Activated naive CD8-positive, alpha-beta T cell treated with anti-CD3 and anti-CD28 coated beads, Interleukin-2, amount 10 ng/mL, durations not matched to agents 7 days and 5 days (primary cell): ENCODE measurements at regions of chr16 and their contacts with region 1.

Region 1: DNA sequence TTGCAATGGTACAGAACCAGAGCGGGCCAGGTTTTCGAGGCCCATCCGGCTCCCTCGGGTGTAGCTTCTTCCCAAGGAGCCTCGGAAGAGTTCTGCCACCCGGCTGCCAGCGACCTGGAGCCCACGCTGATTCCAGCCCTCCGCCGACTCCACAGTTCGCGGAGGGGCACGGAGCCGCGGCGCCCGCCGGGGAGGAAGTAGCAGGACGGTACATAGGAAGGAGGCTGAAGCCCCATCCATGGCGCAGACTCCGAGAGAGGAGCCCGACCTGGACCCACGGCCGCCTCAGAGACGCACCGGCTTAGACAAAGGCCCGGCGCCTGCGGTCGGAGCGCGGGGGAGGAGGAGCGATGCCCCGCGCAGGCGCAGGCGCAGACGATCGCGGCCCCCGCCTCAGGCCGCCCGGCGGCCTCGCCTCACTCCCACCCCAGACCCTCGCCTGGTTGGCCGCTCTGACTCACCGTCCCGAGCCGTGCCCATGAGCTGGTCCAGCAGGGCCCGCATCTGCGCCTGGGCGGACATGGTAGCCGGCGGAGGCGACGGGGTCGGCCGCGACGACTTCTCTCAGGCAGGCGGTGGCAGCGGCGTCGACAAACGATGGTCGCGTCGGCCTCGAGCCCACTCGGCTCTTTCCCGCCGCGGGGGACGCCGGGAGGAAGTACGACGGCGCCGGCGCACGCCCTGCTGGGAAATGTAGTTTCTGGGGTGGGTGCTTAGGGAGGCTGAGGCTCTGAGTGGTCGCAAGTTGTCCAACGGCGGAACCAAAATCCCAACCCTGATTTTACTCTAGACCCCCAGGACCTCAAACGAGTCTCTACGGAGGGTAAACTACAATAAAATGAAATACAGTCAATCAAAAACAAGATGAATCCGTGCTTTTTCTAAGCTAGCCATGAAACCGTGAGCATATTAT is at the start of gene LUC7L:
- DNase-seq: peak; percentile 91
- ATAC-seq: peak; percentile 89
- H3K4me3 Mint-ChIP-seq: peak within 1 kb of the TSS; percentile 92
- H3K27ac Mint-ChIP-seq: peak within 1 kb of the TSS; percentile 92
- H3K4me1 Mint-ChIP-seq: peaks cover 19% of the 10 kb centered on the region
- H3K27me3 Mint-ChIP-seq: no peaks in the 10 kb centered on the region
- total RNA-seq, gene LUC7L: 83.8 to 86.2 TPM

Region 2: GRCh38 chr16:138049-138417 is 91.0 kb before region 1 on chr16:
- POLR2A ChIA-PET with region 1: no interaction called
- DNase-seq: peak; percentile 64
- ATAC-seq: peak; percentile 21
- H3K4me3 Mint-ChIP-seq: peak overlapping the region; percentile 82
- H3K27ac Mint-ChIP-seq: peak overlapping the region; percentile 83
- H3K4me1 Mint-ChIP-seq: peaks cover 16% of the 10 kb centered on the region
- H3K27me3 Mint-ChIP-seq: peaks cover 2% of the 10 kb centered on the region

Region 3: DNA sequence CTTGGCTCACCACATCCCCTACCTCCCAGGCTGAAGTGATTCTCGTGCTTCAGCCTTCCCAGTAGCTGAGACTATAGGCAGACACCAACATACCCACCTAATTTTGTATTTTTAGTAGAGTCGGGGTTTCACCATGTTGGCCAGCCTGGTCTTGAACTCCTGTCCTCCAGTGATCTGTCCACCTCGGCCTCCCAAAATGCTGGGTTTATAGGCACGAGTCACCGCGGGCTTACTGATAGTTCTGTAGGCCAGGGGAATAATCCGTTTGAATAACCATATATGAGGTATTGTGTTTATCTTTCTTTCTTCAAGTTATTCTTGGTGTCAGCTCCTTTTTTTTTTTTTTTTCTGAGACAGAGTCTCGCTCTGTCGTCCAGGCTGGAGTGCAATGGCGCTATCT is 13.2 kb after region 1 on chr16:
- POLR2A ChIA-PET with region 1: interaction called, 10 read pairs
- DNase-seq: no peak
- ATAC-seq: no peak
- H3K4me3 Mint-ChIP-seq: no peak overlapping the region
- H3K27ac Mint-ChIP-seq: no peak overlapping the region
- H3K4me1 Mint-ChIP-seq: peaks cover 3% of the 10 kb centered on the region
- H3K27me3 Mint-ChIP-seq: peaks cover 2% of the 10 kb centered on the region

Region 4: GRCh38 chr16:352547-353403 is 123.7 kb after region 1 on chr16 and contains the start of gene AXIN1:
- POLR2A ChIA-PET with region 1: interaction called, 10 read pairs
- DNase-seq: peak; percentile 100
- ATAC-seq: peak; percentile 74
- H3K4me3 Mint-ChIP-seq: peak within 1 kb of the TSS; percentile 92
- H3K27ac Mint-ChIP-seq: peak within 1 kb of the TSS; percentile 88
- H3K4me1 Mint-ChIP-seq: peaks cover 20% of the 10 kb centered on the region
- H3K27me3 Mint-ChIP-seq: no peaks in the 10 kb centered on the region
- total RNA-seq, gene AXIN1: 30.9 to 32.5 TPM

Region 5: GRCh38 chr16:391885-392335 is 162.8 kb after region 1 on chr16:
- POLR2A ChIA-PET with region 1: no interaction called
- DNase-seq: peak; percentile 70
- ATAC-seq: peak; percentile 78
- H3K4me3 Mint-ChIP-seq: no peak overlapping the region
- H3K27ac Mint-ChIP-seq: peak overlapping the region; percentile 48
- H3K4me1 Mint-ChIP-seq: peaks cover 10% of the 10 kb centered on the region
- H3K27me3 Mint-ChIP-seq: peaks cover 15% of the 10 kb centered on the region